ENCODE measurements at regions of chr1 and their contacts with region 1.

Region 1: DNA sequence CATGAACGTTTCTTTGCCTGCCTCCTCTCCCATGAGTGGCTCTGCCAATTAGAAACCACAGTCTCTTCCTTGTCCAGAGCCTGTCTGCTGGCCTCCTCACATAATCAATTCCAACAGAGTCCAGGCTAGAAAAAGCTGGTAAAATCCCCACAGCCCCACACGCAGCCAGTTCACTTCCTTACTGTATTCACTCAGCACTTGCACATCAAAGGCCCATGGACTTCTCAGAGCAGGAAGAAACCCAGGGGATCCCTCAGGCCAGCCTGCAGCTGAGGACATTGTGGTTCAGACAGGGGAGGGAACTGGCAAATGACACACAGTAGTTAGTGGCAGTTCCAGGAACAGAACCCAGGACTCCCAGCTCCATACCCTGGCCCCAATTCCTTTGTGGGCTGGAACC is 171.6 kb upstream of the EDN2 start:
- DNase-seq: no peak
- CTCF ChIP-seq: no peak

Region 2: DNA sequence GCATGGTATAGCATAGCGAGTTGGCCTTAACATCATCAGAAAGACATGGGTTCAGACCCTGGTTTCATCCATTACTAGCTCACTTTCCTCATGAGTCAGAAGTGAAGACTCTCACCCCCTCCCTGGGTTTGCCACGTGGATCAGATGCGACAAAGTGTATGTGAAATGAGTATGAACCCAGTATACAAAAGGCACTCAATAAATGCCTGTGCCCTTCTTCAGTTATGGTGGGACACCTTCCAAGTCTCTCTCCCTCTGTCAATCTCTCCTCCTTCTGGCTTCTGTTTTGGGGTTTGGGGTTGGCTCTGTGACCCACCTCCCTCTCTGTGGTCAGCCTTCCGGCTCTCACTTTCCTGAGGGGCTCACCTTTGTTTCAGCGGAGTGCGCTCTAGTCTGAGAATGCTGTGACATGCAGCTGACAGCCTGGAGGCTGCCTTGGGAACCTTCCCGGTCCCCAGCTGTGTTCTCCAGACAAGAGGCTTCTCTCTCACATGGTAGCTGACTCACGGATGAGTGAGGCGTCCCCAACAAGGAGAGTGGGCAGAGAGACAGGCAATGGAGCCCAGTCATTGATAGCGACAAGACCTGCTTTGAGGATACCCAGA is 16.6 kb before region 1 on chr1:
- CTCF ChIA-PET with region 1: interaction called, 38 read pairs
- POLR2A ChIA-PET with region 1: interaction called, 5 read pairs
- DNase-seq: peak; percentile 69
- CTCF ChIP-seq: no peak